Right cardiac atrium (tissue), 5 donors: ENCODE measurements at regions of chr10 and their contacts with region 1.

Region 1: DNA sequence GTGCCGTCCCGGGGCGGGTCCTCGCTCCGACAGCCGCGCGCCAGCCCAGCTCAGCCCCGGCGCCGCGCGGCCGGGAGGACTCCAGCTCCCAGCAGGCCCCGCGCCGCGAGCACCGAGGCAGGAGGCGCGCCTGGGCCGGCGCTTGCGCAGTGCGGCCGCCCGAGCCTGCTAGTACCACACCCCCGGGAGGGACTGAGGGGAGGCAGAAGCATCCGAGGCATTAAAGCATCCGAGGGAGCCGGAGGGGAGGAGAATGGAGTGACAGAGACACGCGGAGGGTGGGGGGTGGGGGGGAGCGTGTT is at the start of gene GRK5:
- DNase-seq: peak; percentile 96 to 99 (median 99)
- ATAC-seq: peak; percentile 94 to 96
- H3K4me3 ChIP-seq: peak within 1 kb of the TSS; percentile 81
- H3K27ac ChIP-seq: peak within 1 kb of the TSS; percentile 93
- H3K4me1 ChIP-seq: peaks cover 3% of the 10 kb centered on the region
- H3K27me3 ChIP-seq: no peaks in the 10 kb centered on the region
- total RNA-seq, gene GRK5: 45.2 to 89.9 (median 60.7) TPM

Region 2: GRCh38 chr10:119253433-119254174 is 46.3 kb after region 1 on chr10:
- intact Hi-C with region 1: loop called in 2 of 4 experiments (anchors 5 kb)
- DNase-seq: peak; percentile 81 to 92 (median 89)
- ATAC-seq: peak; percentile 79 to 85
- H3K4me3 ChIP-seq: no peak overlapping the region
- H3K27ac ChIP-seq: peak overlapping the region; percentile 74
- H3K4me1 ChIP-seq: peaks cover 43% of the 10 kb centered on the region
- H3K27me3 ChIP-seq: no peaks in the 10 kb centered on the region

Region 3: DNA sequence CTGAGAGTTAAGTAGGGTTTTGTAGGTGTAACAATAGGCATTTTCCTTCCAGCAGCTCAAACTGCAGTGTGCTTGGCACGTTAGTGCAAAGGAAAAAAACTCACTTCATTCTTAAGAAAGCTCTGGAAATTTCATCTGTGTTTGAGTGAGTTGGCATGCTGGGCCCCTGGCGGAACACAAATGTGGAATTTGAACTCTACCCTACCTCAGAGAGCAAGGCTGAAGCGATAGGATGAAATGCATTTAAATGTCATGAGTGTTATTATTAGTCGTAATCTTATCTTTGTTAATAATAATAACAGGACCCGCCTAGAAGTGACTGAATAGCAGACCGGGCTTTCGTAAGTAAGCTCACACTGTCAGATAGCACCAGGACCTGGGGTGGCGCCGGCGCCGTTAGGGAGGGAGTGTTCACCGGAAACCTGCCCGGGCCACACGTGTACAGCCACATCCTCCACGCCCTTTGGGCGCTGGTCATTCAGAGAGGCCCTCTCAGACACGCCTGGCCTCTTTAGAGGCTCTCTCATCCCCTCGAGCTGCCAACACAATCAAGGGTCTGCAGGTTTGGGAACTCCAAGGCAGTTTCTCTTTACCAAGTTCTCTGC is 63.5 kb after region 1 on chr10:
- intact Hi-C with region 1: loop called in 1 of 4 experiments (anchors 5 kb)
- DNase-seq: peak; percentile 95 to 96 (median 95)
- ATAC-seq: peak; percentile 89 to 94
- H3K4me3 ChIP-seq: no peak overlapping the region
- H3K27ac ChIP-seq: peak overlapping the region; percentile 83
- H3K4me1 ChIP-seq: peaks cover 39% of the 10 kb centered on the region
- H3K27me3 ChIP-seq: no peaks in the 10 kb centered on the region

Region 4: GRCh38 chr10:119281581-119282071 is 74.3 kb after region 1 on chr10:
- intact Hi-C with region 1: loop called in 2 of 4 experiments (anchors 10 kb)
- DNase-seq: peak; percentile 90 to 95 (median 95)
- ATAC-seq: peak; percentile 65
- H3K4me3 ChIP-seq: no peak overlapping the region
- H3K27ac ChIP-seq: peak overlapping the region; percentile 25
- H3K4me1 ChIP-seq: peaks cover 57% of the 10 kb centered on the region
- H3K27me3 ChIP-seq: no peaks in the 10 kb centered on the region

Region 5: DNA sequence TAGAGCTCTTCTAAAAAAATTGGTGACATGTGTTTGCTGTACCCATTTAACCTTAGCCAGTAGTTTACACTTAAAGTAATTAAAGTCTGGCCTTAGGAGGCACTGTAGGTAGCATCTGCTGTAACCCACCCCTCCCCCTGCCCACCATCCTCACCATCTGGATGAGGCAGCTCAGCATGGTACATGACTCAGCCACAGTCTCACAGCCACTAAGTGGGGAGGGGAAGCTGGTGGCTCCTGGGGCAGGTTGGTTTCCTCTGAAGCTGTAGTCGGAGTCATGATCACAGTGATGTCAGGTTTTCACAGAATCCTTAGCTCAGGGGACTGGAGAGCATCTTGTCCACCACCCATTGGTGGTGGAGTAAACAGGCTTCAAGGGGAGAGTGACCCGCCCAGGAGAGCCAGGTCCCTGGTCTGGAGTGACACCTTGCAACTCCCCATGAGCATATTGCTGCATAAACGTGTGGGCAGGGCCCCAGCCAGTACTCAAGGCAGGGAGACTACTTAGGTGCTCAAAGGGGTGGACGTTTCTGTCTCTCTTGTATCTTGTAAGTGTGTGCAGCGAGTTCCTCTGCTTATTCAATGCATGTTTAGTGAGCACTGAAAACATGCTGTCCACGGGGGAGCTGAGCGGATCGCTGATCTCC is 126.0 kb after region 1 on chr10:
- intact Hi-C with region 1: loop called in 1 of 4 experiments (anchors 10 kb)
- DNase-seq: no peak
- ATAC-seq: no peak
- H3K4me3 ChIP-seq: no peak overlapping the region
- H3K27ac ChIP-seq: no peak overlapping the region
- H3K4me1 ChIP-seq: peaks cover 22% of the 10 kb centered on the region
- H3K27me3 ChIP-seq: no peaks in the 10 kb centered on the region

Region 6: GRCh38 chr10:119416855-119417254 is 209.5 kb after region 1 on chr10:
- intact Hi-C with region 1: loop called in 3 of 4 experiments (anchors 5 to 10 kb)
- DNase-seq: peak; percentile 64 to 90 (median 85)
- ATAC-seq: peak; percentile 10 to 14
- H3K4me3 ChIP-seq: no peak overlapping the region
- H3K27ac ChIP-seq: no peak overlapping the region
- H3K4me1 ChIP-seq: peaks cover 14% of the 10 kb centered on the region
- H3K27me3 ChIP-seq: no peaks in the 10 kb centered on the region

Region 7: GRCh38 chr10:119445311-119445934 is 238.1 kb after region 1 on chr10:
- intact Hi-C with region 1: loop called in 1 of 4 experiments (anchors 10 kb)
- DNase-seq: peak; percentile 85 to 93 (median 93)
- ATAC-seq: peak; percentile 61 to 63
- H3K4me3 ChIP-seq: no peak overlapping the region
- H3K27ac ChIP-seq: no peak overlapping the region
- H3K4me1 ChIP-seq: no peaks in the 10 kb centered on the region
- H3K27me3 ChIP-seq: no peaks in the 10 kb centered on the region